ENCODE measurements at regions of chr20 and their contacts with region 1.

Region 1: DNA sequence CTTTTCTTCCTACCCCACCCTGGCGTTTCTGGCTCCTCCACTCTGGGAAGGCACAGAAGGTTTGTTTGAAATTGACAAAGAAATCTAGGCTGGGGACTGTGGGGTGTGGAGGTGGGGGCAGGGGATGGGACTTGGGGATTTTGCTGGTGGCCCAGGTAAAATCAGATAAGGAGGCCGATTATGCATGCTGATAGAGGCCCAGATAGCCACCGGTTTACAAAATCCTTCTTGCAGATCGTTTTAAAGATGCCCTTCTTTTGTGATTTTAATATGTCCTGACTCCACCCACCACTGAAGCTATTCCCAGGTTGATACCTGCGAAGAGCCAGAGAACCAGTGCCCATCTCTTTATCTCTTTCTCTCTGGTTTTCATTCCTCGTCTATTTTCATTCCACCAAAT is 104.9 kb downstream of the TFAP2C start:
- DNase-seq: no peak
- H3K4me3 ChIP-seq: no peak overlapping the region
- H3K27ac ChIP-seq: no peak overlapping the region
- H3K4me1 ChIP-seq: no peaks in the 10 kb centered on the region
- H3K27me3 ChIP-seq: no peaks in the 10 kb centered on the region
- CTCF ChIP-seq: no peak

Region 2: DNA sequence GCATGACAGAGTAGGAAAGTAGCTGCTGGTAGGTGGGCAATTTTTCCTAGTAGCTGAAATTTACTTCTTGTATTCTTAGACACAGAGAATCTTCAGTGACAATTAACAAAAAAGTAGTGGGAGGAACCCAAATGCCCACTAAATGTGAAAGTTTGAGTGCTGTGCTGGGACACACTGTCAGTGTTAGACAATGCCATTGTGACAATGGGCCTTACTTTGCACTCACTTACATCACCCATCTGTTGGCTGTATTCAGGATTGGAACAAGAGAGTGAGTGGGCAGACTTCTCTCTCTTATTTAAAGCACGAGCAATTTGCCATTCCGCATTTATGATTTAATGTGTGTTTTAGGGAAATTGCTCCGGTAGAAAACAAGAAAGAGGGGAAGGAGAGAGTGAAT is 1391.1 kb before region 1 on chr20:
- CTCF ChIA-PET with region 1: interaction called, 13 read pairs
- POLR2A ChIA-PET with region 1: no interaction called
- intact Hi-C with region 1: no loop called
- DNase-seq: no peak
- H3K4me3 ChIP-seq: no peak overlapping the region
- H3K27ac ChIP-seq: no peak overlapping the region
- H3K4me1 ChIP-seq: no peaks in the 10 kb centered on the region
- H3K27me3 ChIP-seq: peaks cover 68% of the 10 kb centered on the region
- CTCF ChIP-seq: no peak

Region 3: GRCh38 chr20:56343861-56344381 is 390.0 kb before region 1 on chr20:
- CTCF ChIA-PET with region 1: no interaction called
- POLR2A ChIA-PET with region 1: no interaction called
- intact Hi-C with region 1: no loop called
- DNase-seq: peak in 1 of 2 experiments; percentile 17
- H3K4me3 ChIP-seq: no peak overlapping the region
- H3K27ac ChIP-seq: no peak overlapping the region
- H3K4me1 ChIP-seq: no peaks in the 10 kb centered on the region
- H3K27me3 ChIP-seq: peaks cover 81% of the 10 kb centered on the region
- CTCF ChIP-seq: peak; percentile 48

Measured in PC-9 (cell line).